ENCODE measurements at regions of chr2 and their contacts with region 1.

Region 1: GRCh38 chr2:43376523-43377198 is 150.3 kb upstream of the ZFP36L2 start:
- DNase-seq: no peak
- ATAC-seq: no peak
- H3K4me3 ChIP-seq: no peak overlapping the region
- H3K27ac ChIP-seq: no peak overlapping the region
- H3K4me1 ChIP-seq: no peaks in the 10 kb centered on the region
- H3K27me3 ChIP-seq: no peaks in the 10 kb centered on the region
- CTCF ChIP-seq: no peak

Region 2: GRCh38 chr2:43397398-43397797 is 20.7 kb after region 1 on chr2:
- CTCF ChIA-PET with region 1: no interaction called
- POLR2A ChIA-PET with region 1: interaction called, 10 read pairs
- in situ Hi-C with region 1: no loop called
- intact Hi-C with region 1: no loop called
- DNase-seq: no peak
- ATAC-seq: no peak
- H3K4me3 ChIP-seq: no peak overlapping the region
- H3K27ac ChIP-seq: no peak overlapping the region
- H3K4me1 ChIP-seq: no peaks in the 10 kb centered on the region
- H3K27me3 ChIP-seq: no peaks in the 10 kb centered on the region
- CTCF ChIP-seq: no peak

Region 3: GRCh38 chr2:43519643-43520221 is 143.1 kb after region 1 on chr2:
- CTCF ChIA-PET with region 1: no interaction called
- POLR2A ChIA-PET with region 1: no interaction called
- in situ Hi-C with region 1: no loop called
- intact Hi-C with region 1: no loop called
- DNase-seq: no peak
- ATAC-seq: peak; percentile 84
- H3K4me3 ChIP-seq: no peak overlapping the region
- H3K27ac ChIP-seq: no peak overlapping the region
- H3K4me1 ChIP-seq: no peaks in the 10 kb centered on the region; the same call in 1 of the 2 replicates
- H3K27me3 ChIP-seq: no peaks in the 10 kb centered on the region
- CTCF ChIP-seq: no peak